ENCODE measurements at regions of chr13 and their contacts with region 1.

Region 1: DNA sequence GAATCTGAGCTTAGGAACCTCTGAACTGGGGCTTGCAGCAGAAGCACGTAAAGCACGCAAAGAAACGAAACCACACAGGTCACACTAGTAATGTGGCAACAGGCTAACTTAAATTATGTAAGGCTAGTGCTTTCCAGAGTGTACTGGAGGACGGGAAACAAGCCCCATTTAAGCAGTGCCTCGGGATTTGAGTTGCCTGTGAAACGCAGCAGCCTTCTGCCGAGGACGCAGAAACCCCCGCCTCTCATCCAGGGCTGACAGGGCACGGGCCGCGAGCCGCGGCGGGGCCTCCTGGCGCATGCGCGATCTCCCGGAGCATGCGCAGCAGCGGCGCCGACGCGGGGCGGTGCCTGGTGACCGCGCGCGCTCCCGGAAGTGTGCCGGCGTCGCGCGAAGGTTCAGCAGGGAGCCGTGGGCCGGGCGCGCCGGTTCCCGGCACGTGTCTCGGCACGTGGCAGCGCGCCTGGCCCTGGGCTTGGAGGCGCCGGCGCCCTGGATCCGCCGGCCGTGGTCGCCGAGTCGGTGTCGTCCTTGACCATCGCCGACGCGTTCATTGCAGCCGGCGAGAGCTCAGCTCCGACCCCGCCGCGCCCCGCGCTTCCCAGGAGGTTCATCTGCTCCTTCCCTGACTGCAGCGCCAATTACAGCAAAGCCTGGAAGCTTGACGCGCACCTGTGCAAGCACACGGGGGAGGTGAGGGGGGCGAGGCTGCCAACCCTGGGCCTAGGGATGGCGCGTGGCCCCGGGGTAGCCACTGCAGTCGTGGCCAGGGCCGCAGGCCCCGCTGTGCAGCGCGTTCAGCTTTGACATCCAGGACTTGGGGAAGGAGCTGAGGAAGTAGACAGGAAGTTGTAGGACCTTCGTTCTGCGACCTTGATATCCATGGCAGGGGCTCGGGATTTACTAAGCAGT is at the start of gene GTF3A:
- DNase-seq: peak; percentile 79 to 92
- H3K4me3 ChIP-seq: peak within 1 kb of the TSS; percentile 81 to 92
- H3K27ac ChIP-seq: peak within 1 kb of the TSS; percentile 79 to 80
- H3K4me1 ChIP-seq: peaks cover 0 to 33% (median 24%) of the 10 kb centered on the region in 4 donors
- H3K27me3 ChIP-seq: no peaks in the 10 kb centered on the region
- CTCF ChIP-seq: no peak

Region 2: GRCh38 chr13:27339299-27339698 is 85.2 kb before region 1 on chr13:
- intact Hi-C with region 1: no loop called
- DNase-seq: peak in 1 of 2 donors; percentile 63
- H3K4me3 ChIP-seq: no peak overlapping the region
- H3K27ac ChIP-seq: no peak overlapping the region
- H3K4me1 ChIP-seq: no peaks in the 10 kb centered on the region
- H3K27me3 ChIP-seq: peaks cover 0 to 3% of the 10 kb centered on the region in 2 donors
- CTCF ChIP-seq: peak; percentile 14 to 26

Region 3: DNA sequence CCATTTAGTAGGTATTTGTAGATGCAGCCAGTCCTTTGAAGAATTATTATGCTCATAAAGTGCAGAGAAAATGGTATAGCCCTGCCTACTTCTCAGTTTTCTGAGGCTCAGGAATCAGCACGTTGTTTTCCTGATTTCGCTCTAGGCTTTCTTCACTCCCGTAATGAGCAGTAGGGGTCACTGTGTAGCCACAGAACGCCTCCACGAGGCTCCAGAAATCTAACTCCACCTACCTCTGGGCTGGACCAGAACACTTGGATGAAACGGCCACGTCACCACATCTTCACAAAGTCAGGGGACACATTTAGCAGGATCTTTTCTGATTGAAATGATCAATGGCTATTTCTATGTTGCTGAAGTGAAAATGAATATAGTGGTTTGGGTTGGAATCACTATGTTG is 49.9 kb before region 1 on chr13:
- intact Hi-C with region 1: loop called (anchors 10 kb)
- DNase-seq: peak; percentile 42 to 77
- H3K4me3 ChIP-seq: no peak overlapping the region
- H3K27ac ChIP-seq: no peak overlapping the region
- H3K4me1 ChIP-seq: peaks cover 0 to 8% (median 3%) of the 10 kb centered on the region in 4 donors
- H3K27me3 ChIP-seq: peaks cover 0 to 29% of the 10 kb centered on the region in 2 donors
- CTCF ChIP-seq: peak; percentile 65 to 68

Region 4: GRCh38 chr13:27449936-27450828 is 25.7 kb after region 1 on chr13 and contains the start of gene MTIF3:
- intact Hi-C with region 1: loop called (anchors 2 kb)
- DNase-seq: peak; percentile 92 to 95
- H3K4me3 ChIP-seq: peak within 1 kb of the TSS; percentile 84 to 91
- H3K27ac ChIP-seq: peak within 1 kb of the TSS; percentile 95
- H3K4me1 ChIP-seq: peaks cover 0 to 31% (median 16%) of the 10 kb centered on the region in 4 donors
- H3K27me3 ChIP-seq: no peaks in the 10 kb centered on the region
- CTCF ChIP-seq: peak in 1 of 2 experiments; percentile 8

Region 5: DNA sequence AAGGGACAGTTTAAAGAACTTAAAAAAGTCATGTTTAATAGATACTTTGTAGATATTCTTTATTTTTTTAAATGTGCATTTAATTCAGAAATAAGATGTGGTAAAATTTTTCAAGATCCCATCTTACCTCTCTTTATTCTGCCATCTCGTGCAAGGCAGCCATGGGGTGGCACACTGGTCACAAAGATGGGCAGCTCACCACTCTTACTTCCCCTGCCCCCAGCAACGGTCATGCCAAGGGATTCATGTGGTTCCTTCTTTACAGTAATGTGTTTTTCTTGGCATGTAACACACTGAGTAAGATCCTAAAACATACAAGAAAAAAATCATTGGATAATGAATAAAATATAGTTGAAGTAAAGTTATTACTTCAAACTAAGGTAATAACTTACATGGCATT is 131.6 kb after region 1 on chr13:
- intact Hi-C with region 1: no loop called
- DNase-seq: peak; percentile 50 to 70
- H3K4me3 ChIP-seq: no peak overlapping the region
- H3K27ac ChIP-seq: no peak overlapping the region
- H3K4me1 ChIP-seq: no peaks in the 10 kb centered on the region
- H3K27me3 ChIP-seq: no peaks in the 10 kb centered on the region
- CTCF ChIP-seq: peak; percentile 18 to 39